ENCODE measurements at regions of chr4 and their contacts with region 1.

Region 1: GRCh38 chr4:145936142-145936996 is 2.3 kb downstream of the ZNF827 start:
- DNase-seq: peak; percentile 75
- H3K4me3 ChIP-seq: peak overlapping the region; percentile 87
- H3K27ac ChIP-seq: peak overlapping the region; percentile 87
- H3K4me1 ChIP-seq: peaks cover 28% of the 10 kb centered on the region
- H3K27me3 ChIP-seq: no peaks in the 10 kb centered on the region
- CTCF ChIP-seq: no peak; the same call in 1 of the 2 replicates

Region 2: DNA sequence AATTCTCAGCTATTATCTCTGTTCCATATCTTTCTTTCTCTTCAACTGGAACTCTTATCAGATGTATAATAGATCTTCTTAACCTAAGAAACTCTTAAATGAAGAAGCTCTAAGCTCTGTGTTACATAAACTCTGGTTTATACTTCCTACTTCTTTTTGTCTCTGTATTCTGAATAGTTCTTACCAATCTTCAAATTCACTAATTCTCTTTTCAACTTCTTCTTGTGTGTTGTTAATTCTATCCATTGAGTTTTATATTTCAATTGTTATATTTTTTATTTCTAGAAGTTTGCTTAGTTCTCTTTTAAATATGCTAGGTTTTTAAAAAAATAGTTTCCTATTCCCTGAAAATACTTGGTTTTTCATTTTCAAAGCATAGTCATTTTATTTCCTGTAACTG is 330.4 kb before region 1 on chr4:
- CTCF ChIA-PET with region 1: no interaction called
- POLR2A ChIA-PET with region 1: no interaction called
- intact Hi-C with region 1: no loop called
- DNase-seq: no peak
- H3K4me3 ChIP-seq: no peak overlapping the region
- H3K27ac ChIP-seq: no peak overlapping the region
- H3K4me1 ChIP-seq: no peaks in the 10 kb centered on the region
- H3K27me3 ChIP-seq: no peaks in the 10 kb centered on the region
- CTCF ChIP-seq: no peak

Region 3: GRCh38 chr4:145618932-145619638 is 317.3 kb before region 1 on chr4 and contains the start of gene MMAA:
- CTCF ChIA-PET with region 1: no interaction called
- POLR2A ChIA-PET with region 1: no interaction called
- intact Hi-C with region 1: loop called (anchors 5 kb)
- DNase-seq: peak; percentile 97
- H3K4me3 ChIP-seq: peak within 1 kb of the TSS; percentile 70
- H3K27ac ChIP-seq: peak within 1 kb of the TSS; percentile 95
- H3K4me1 ChIP-seq: peaks cover 3% of the 10 kb centered on the region
- H3K27me3 ChIP-seq: no peaks in the 10 kb centered on the region
- CTCF ChIP-seq: peak; percentile 81
- total RNA-seq, gene MMAA: 5.5 and 6.8 TPM in 2 replicates

Region 4: DNA sequence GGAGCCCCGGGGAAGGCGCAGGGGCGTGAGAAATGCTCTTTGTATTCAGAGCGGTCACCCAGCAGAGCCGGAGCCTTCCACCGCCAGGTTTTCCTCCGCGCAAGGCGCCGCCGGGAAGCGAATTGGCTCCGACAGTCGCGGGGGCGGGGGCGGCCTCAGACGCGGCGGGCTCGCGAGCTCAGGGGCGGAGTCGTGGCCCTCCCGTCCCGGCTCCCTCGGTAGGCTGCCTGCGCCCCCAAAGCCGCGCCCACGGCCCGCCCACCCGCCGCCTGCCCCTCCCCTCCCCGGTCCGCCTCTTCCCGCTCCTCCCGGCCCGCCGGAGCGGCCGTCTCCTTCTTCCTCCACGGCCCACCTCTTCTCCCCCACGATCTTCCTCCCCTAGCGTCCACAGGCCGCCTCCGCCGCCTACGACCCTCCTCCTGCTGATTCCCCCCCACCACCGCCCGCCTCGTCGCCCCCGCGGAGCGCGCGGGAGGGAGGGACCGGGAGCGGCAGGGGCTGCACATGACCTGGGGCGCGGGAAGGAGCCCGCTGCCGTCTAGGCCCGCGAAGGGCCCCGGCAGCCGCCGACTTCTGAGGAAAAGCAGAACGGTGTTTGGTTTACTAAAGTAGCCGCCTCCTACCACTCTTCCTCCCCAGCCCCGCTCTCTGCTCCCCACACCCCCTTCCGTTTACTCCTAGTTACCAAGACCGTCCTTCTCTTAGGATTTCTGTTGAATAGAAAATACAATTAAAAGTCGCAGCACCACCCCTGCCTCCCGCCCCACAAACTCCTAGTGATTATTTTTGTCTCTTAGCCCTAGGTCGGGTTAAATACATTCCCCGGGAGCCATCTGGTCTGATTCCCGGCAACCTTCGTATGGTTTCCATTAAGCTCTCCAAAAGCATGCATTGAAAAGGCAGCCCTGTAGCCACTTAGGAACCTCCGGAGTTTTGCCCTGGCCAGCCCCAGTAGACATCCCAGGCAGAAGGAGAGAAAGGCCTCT is 203.2 kb before region 1 on chr4:
- CTCF ChIA-PET with region 1: no interaction called
- POLR2A ChIA-PET with region 1: no interaction called
- intact Hi-C with region 1: loop called (anchors 5 kb)
- DNase-seq: peak; percentile 96
- H3K4me3 ChIP-seq: peak overlapping the region; percentile 57
- H3K27ac ChIP-seq: peak overlapping the region; percentile 81
- H3K4me1 ChIP-seq: peaks cover 8% of the 10 kb centered on the region
- H3K27me3 ChIP-seq: no peaks in the 10 kb centered on the region
- CTCF ChIP-seq: no peak

Region 5: DNA sequence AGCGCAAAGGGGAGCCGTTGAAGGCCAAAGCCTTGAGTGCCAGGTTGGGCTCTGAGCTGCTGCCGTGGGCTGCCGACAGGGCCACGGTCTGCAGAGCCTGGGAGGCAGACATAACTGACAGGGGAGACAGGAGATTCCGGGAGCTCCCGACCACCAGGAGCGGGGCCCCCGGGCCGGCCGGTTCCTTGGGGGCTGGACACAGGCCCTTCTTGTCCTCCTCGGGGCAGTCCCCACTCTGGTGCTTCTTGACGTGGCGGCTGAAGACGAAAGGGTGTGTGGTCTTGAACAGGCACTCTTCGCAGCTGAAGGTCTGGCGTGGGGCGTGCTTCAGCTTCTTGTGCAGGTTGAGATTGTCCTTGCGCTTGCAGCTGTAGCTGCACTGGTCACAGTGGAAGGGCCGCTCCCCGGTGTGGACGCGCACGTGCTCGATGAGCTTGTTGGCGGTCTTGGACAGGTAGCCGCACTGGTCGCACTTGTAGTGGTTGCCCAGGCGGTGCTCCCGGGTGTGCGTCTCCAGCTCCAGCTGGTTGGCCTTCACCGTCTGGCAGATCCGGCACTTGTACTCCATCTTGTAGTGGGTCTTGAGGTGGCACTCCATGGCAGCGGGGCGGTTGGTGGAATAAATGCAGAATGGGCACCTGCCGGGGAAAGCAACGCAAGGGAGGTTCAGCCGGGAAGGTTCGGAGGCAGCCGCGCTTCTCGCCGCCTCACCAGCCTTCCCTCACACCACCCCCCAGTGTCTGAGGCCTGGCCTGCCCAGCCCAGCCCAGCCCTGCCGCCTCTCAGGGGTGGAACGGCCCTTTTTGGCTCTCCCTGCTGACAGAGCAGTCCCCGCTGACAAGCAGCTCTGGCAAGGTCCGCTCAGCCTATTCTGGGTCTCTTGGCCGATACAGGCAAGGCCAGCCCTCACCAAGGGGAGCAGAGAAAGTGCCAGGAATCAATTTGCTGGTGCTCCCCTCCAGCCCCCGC is 175.1 kb before region 1 on chr4:
- CTCF ChIA-PET with region 1: no interaction called
- POLR2A ChIA-PET with region 1: no interaction called
- intact Hi-C with region 1: no loop called
- DNase-seq: no peak
- H3K4me3 ChIP-seq: no peak overlapping the region
- H3K27ac ChIP-seq: no peak overlapping the region
- H3K4me1 ChIP-seq: no peaks in the 10 kb centered on the region
- H3K27me3 ChIP-seq: no peaks in the 10 kb centered on the region
- CTCF ChIP-seq: no peak

Region 6: GRCh38 chr4:145840162-145840768 is 96.1 kb before region 1 on chr4:
- CTCF ChIA-PET with region 1: no interaction called
- POLR2A ChIA-PET with region 1: no interaction called
- intact Hi-C with region 1: loop called (anchors 2 kb)
- DNase-seq: peak; percentile 86
- H3K4me3 ChIP-seq: no peak overlapping the region
- H3K27ac ChIP-seq: no peak overlapping the region
- H3K4me1 ChIP-seq: peaks cover 24% of the 10 kb centered on the region
- H3K27me3 ChIP-seq: no peaks in the 10 kb centered on the region
- CTCF ChIP-seq: peak; percentile 73

Region 7: DNA sequence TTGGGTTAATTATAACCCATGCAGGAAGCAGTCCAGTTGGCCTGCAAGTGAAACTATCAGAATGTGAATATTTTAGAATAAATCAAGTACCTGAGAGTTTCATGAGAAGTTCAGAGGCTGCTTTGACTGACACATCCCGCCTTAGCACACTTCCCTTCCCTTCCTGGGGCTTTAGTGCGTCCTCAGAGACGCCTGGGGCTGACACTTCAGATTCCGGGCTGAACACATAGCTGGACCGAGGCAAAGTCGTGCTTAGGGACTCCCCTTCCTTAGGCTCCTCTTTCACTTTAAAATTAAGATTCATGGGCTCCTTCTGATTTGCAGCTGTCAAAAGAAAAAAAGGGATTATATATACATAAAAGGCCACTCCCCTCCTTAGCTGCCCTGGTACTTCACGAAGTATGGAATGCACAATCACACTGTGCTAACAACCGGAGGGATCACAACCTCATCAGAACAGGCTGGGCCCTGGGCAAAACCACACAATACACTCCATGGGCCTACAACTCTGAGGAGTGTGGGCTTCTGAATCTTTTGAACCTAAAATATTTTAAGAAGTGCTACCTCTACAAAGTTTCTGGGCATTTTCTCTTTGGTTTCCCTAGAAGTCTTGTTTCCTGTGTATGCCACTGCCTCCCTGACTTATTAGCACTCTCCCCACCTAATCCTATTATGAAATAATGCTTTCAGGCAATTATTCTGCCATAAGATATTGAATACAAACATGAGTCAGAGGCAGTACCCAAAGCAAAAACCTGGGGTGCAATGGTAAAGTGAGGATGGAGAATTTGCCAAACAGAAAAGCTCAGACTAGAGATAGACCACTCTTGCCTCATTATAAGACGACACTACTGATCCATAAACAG is 66.0 kb before region 1 on chr4:
- CTCF ChIA-PET with region 1: interaction called, 6 read pairs
- POLR2A ChIA-PET with region 1: no interaction called
- intact Hi-C with region 1: loop called (anchors 5 kb)
- DNase-seq: peak; percentile 92
- H3K4me3 ChIP-seq: peak overlapping the region; percentile 36
- H3K27ac ChIP-seq: peak overlapping the region; percentile 79
- H3K4me1 ChIP-seq: peaks cover 57% of the 10 kb centered on the region
- H3K27me3 ChIP-seq: no peaks in the 10 kb centered on the region
- CTCF ChIP-seq: no peak